ENCODE measurements at regions of chr2 and their contacts with region 1.

Region 1: DNA sequence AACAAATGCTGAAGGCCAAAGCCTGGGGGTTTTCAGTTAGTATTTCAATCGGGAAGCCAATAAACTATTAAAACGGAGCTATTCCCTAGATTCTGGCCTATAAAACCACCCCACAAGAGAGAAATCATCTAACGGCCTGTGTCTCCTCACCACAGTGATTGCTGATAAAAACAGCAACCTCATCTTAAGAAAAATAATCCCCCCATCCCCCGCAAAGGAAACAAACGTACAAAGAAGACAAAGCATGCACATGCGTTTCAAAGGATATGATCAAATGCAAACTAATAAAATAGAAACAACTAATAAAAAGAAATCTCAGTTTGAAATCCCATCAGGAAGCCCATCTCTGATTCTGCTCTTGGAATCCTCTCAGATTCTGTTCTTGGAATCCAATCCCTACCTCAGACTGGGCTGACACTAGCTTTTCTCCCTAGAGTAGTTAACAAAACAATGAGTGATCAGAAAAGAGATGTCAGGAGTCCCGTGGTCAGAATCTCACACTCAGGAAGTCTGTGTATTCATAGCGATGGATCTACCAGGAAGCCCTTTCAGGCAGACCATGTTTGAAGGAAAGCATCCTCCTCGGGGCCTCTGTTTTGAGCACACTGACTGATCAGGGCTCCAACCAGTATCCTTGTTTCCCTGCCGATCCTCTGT is 150.7 kb downstream of the THADA start:
- DNase-seq: no peak
- ATAC-seq: no peak
- H3K4me3 ChIP-seq: no peak overlapping the region
- H3K27ac ChIP-seq: no peak overlapping the region
- H3K4me1 ChIP-seq: peaks cover 46% of the 10 kb centered on the region
- CTCF ChIP-seq: no peak
- EP300 ChIP-seq: no peak
- POLR2A ChIP-seq: no peak
- RAD21 ChIP-seq: no peak

Region 2: DNA sequence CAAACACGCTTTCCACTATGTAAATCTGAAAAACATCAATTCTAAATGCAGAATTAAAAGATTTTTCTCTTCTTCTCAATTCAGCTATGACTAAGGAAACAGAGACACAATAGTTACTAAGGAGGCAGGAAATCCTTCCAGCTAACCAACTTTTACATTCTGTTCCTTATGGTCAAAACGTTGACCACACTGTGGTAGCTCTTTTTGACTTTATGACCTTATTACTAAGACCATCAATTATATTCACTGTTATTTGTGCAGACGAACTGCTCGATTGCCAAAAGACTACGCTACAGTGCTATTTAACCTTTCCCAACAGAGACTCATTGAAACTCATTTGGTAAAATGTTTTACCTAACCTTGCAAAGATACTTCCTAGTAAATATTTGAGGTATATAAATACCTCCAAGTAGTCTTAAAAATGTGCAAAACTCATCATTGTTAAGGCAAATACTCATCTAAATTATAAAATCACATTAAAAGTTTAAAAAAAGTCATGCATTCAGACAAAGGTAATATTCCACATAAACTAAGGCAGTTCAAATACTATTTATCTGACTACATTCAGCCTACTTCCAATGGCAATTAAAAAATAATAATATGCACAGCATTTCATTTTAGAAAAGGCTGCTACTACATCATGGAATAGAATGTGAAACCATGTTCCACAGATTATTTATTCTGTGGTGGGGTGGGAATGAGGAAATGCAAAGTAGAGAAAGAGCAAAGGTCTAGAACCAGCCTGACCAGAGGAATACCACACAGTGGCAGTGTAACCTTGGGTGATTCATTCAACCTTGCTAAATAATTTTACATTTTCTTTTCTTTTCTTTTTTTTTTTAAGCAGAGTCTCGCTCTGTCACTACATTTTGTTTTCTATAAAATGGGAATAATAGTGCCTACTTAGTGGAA is 10.9 kb after region 1 on chr2:
- CTCF ChIA-PET with region 1: interaction called, 22 read pairs
- POLR2A ChIA-PET with region 1: no interaction called
- DNase-seq: peak in 1 of 2 experiments; percentile 54
- ATAC-seq: peak; percentile 73; a peak in 5 of 6 replicates
- H3K4me3 ChIP-seq: no peak overlapping the region
- H3K27ac ChIP-seq: peak overlapping the region; percentile 42 to 66
- H3K4me1 ChIP-seq: peaks cover 71% of the 10 kb centered on the region
- CTCF ChIP-seq: peak; percentile 43
- EP300 ChIP-seq: no peak
- POLR2A ChIP-seq: no peak
- RAD21 ChIP-seq: peak; percentile 34 to 58; a peak in 3 of 5 replicates

Measured in A549 (cell line).